ENCODE measurements at regions of chr14 and their contacts with region 1.

Region 1: DNA sequence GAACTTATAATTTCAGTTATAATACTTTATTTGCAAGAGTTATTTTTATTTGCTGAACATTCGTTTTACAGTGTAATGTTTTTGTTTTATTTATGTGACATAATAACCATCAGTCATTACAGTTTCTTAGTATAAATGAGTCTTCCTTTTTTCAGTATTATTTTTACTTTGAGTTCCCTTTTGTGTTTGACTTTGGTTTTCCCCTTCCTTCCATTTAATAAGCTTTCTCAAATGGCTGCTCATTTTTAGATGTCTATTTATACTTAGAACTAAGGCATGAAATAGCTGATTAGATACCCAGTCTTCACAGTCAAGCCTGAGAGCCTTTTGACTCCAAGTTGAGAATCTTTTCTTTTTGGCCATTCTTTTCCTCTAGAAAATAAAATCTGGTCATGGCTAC is 404.5 kb downstream of the LRFN5 start:
- DNase-seq: no peak
- H3K4me3 ChIP-seq: no peak overlapping the region
- H3K27me3 ChIP-seq: no peaks in the 10 kb centered on the region
- CTCF ChIP-seq: no peak

Region 2: DNA sequence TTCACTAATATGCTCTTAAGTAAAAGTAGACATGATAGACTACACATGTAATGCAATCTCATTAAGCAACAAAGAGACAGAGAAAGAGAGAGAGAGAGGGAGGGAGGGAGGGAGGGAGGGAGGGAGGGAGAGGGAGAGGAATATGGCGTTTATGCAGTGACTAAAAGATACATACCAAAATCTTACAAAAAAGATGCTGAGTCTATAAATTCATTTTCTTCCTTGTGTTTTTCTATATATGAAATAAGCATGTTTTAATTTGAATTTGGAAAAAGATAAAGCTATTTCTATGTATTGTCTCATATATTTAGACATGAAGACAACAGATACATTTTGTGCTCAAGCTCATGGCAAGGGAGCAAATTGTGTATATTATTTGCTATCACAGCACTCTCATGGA is 360.4 kb before region 1 on chr14:
- CTCF ChIA-PET with region 1: no interaction called
- POLR2A ChIA-PET with region 1: no interaction called
- DNase-seq: no peak
- H3K4me3 ChIP-seq: no peak overlapping the region
- H3K27me3 ChIP-seq: no peaks in the 10 kb centered on the region
- CTCF ChIP-seq: no peak

Region 3: GRCh38 chr14:42200947-42201346 is 189.7 kb after region 1 on chr14:
- CTCF ChIA-PET with region 1: no interaction called
- POLR2A ChIA-PET with region 1: interaction called, 19 read pairs
- DNase-seq: no peak
- H3K4me3 ChIP-seq: no peak overlapping the region
- H3K27me3 ChIP-seq: no peaks in the 10 kb centered on the region
- CTCF ChIP-seq: no peak